ENCODE measurements at regions of chr6 and their contacts with region 1.

Region 1: GRCh38 chr6:41092421-41093140 is 19.8 kb downstream of the NFYA start:
- DNase-seq: no peak
- ATAC-seq: no peak
- H3K4me3 Mint-ChIP-seq: no peak overlapping the region
- H3K27ac Mint-ChIP-seq: no peak overlapping the region
- H3K4me1 Mint-ChIP-seq: peaks cover 2% of the 10 kb centered on the region
- H3K27me3 Mint-ChIP-seq: no peaks in the 10 kb centered on the region

Region 2: GRCh38 chr6:41027799-41028628 is 64.6 kb before region 1 on chr6:
- CTCF ChIA-PET with region 1: no interaction called
- POLR2A ChIA-PET with region 1: no interaction called
- DNase-seq: peak; percentile 82
- ATAC-seq: peak; percentile 89
- H3K4me3 Mint-ChIP-seq: peak overlapping the region; percentile 81
- H3K27ac Mint-ChIP-seq: peak overlapping the region; percentile 82
- H3K4me1 Mint-ChIP-seq: peaks cover 21% of the 10 kb centered on the region
- H3K27me3 Mint-ChIP-seq: no peaks in the 10 kb centered on the region

Region 3: DNA sequence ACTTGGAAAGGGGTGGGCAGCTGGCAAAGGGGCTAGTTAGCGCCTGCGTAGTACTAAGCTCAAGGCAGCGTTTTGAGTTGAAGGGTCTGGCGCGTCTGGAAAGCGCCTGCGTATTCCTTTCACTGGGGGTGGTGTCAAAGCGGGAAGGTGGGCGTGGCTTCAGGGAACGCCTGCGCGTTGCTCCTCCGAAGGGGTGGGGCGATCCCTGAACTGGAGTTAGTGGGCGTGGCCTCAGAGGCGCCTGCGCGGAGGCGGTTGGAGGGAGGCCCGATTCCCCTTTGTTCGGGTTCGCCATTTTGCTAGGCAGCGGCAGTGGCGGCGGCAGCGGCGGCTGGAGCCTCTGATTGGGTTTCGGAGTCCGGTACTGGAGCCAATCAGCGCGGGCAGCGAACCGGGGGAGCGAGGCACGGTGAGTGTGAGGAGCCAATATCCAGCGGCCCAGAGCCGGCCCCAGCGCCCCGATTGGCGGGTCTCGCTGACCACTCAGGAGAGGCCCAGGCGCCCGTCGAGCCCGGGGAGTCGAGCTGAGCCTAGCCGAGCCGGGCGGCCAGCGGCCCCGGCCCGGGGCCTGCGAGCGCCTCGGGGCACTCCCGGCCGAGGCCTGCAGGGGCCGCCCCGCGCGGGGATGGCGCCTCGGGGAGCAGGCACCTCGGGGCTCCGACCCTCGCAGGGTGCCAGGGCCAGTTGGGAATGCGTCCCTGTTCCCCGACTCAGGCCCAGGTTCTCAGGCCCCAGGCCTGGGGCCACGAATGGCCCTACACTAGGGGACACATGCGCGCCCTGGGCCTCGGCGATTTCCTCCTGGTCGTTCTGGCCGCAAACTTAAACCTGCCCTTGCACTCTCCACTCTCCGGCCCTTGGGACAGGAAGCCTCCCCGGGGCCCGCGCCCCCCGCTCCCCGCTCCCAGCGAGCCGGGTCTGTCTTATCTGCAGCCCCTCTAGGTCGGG is 19.6 kb before region 1 on chr6 and contains the start of gene NFYA:
- CTCF ChIA-PET with region 1: interaction called, 13 read pairs
- POLR2A ChIA-PET with region 1: no interaction called
- DNase-seq: peak; percentile 100
- ATAC-seq: peak; percentile 80
- H3K4me3 Mint-ChIP-seq: peak within 1 kb of the TSS; percentile 91
- H3K27ac Mint-ChIP-seq: peak within 1 kb of the TSS; percentile 98
- H3K4me1 Mint-ChIP-seq: peaks cover 54% of the 10 kb centered on the region
- H3K27me3 Mint-ChIP-seq: no peaks in the 10 kb centered on the region
- total RNA-seq, gene NFYA: 32.3 to 32.5 TPM

Region 4: GRCh38 chr6:41080621-41081020 is 12.0 kb before region 1 on chr6:
- CTCF ChIA-PET with region 1: interaction called, 13 read pairs
- POLR2A ChIA-PET with region 1: no interaction called
- DNase-seq: peak; percentile 57
- ATAC-seq: peak; percentile 96
- H3K4me3 Mint-ChIP-seq: peak overlapping the region; percentile 69
- H3K27ac Mint-ChIP-seq: peak overlapping the region; percentile 85
- H3K4me1 Mint-ChIP-seq: peaks cover 60% of the 10 kb centered on the region
- H3K27me3 Mint-ChIP-seq: no peaks in the 10 kb centered on the region

Measured in activated CD8-positive, alpha-beta T cell treated with anti-CD3 and anti-CD28 coated beads, Interleukin-2, amount 10 ng/mL, durations not matched to agents 7 days and 5 days (primary cell).